OCI-LY7 (cell line): ENCODE measurements at regions of chr18 and their contacts with region 1.

Region 1: GRCh38 chr18:47595815-47596496 is 334.5 kb downstream of the SMAD2 start:
- DNase-seq: peak; percentile 1
- H3K4me3 ChIP-seq: no peak overlapping the region
- H3K27ac ChIP-seq: no peak overlapping the region
- H3K4me1 ChIP-seq: no peaks in the 10 kb centered on the region
- CTCF ChIP-seq: peak; percentile 65

Region 2: GRCh38 chr18:47558110-47558750 is 37.7 kb before region 1 on chr18:
- CTCF ChIA-PET with region 1: no interaction called
- POLR2A ChIA-PET with region 1: no interaction called
- intact Hi-C with region 1: no loop called
- DNase-seq: peak; percentile 1
- H3K4me3 ChIP-seq: no peak overlapping the region
- H3K27ac ChIP-seq: no peak overlapping the region
- H3K4me1 ChIP-seq: no peaks in the 10 kb centered on the region
- CTCF ChIP-seq: no peak

Region 3: GRCh38 chr18:47748847-47749599 is 153.1 kb after region 1 on chr18:
- CTCF ChIA-PET with region 1: no interaction called
- POLR2A ChIA-PET with region 1: no interaction called
- intact Hi-C with region 1: loop called (anchors 1 kb)
- DNase-seq: peak; percentile 18
- H3K4me3 ChIP-seq: no peak overlapping the region
- H3K27ac ChIP-seq: no peak overlapping the region
- H3K4me1 ChIP-seq: no peaks in the 10 kb centered on the region
- CTCF ChIP-seq: peak; percentile 73